Activated T-helper 2 cell treated with anti-CD3 and anti-CD28 coated beads, Interferon-gamma antibody, Interleukin-2, Interleukin-4, amounts not matched to agents 10 μg/mL and 5 μg/mL and 100 μg/mL, durations not matched to agents 14 hours and 24 hours and 36 hours (primary cell): ENCODE measurements at regions of chr15 and their contacts with region 1.

Region 1: DNA sequence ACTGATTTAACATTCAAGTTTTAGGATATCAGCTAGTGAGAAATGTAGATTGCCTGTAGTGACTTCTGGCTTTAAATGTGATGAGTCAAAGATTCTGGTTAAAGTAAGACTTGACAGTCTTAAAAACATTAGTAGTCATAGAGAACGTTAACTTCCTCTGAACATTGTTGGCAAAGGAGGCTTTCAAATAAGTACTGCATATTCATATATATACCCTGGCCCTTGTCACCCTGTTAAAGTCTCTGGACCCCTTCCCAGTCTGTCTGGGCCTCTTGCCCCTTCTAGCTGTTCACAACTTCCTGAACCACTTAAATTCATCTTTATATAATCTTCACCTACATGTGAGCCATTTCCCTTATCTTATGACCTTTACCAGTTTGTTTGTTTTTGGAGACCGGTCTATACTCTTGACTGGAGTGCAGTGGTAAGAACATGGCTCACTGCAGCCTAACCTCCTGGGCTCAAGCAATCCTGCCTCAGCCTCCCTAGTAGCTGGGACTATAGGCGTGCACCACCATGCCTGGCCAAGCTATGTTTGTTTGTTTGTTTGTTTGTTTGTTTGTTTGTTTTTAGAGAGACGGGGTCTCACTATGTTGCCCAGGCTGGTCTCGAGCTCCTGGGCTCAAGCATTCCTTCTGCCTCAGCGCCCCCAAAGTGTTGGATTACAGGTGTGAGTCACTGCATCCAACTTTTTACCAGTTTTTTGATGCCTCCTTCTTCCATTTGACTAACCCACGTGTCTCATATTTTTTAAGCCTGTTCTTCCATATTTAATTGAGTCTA is 64.4 kb upstream of the CRTC3 start:
- DNase-seq: no peak
- H3K4me3 Mint-ChIP-seq: no peak overlapping the region
- H3K27ac Mint-ChIP-seq: peak overlapping the region; percentile 23
- H3K4me1 Mint-ChIP-seq: peaks cover 33% of the 10 kb centered on the region
- H3K27me3 Mint-ChIP-seq: no peaks in the 10 kb centered on the region

Region 2: DNA sequence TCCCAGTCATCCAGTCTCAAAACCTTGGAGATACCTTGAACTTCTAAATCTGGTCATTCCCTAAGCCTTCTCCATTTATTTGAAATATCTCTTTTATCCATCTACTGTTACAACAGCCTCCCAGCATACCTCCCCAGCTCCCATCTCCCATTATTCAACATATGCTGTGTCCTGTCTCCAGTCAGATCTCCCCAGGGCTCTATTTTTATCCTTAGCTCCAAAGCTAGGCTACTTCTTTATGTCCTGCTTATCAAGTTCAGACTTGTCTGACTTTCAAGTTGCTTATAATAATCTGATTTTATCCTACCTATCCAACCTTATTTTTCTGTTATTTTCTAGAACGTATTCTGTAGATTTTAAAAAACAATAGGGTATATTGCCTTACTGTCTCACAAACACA is 33.1 kb before region 1 on chr15:
- intact Hi-C with region 1: loop called (anchors 5 kb)
- DNase-seq: no peak
- H3K4me3 Mint-ChIP-seq: no peak overlapping the region
- H3K27ac Mint-ChIP-seq: no peak overlapping the region
- H3K4me1 Mint-ChIP-seq: peaks cover 18% of the 10 kb centered on the region
- H3K27me3 Mint-ChIP-seq: no peaks in the 10 kb centered on the region

Region 3: DNA sequence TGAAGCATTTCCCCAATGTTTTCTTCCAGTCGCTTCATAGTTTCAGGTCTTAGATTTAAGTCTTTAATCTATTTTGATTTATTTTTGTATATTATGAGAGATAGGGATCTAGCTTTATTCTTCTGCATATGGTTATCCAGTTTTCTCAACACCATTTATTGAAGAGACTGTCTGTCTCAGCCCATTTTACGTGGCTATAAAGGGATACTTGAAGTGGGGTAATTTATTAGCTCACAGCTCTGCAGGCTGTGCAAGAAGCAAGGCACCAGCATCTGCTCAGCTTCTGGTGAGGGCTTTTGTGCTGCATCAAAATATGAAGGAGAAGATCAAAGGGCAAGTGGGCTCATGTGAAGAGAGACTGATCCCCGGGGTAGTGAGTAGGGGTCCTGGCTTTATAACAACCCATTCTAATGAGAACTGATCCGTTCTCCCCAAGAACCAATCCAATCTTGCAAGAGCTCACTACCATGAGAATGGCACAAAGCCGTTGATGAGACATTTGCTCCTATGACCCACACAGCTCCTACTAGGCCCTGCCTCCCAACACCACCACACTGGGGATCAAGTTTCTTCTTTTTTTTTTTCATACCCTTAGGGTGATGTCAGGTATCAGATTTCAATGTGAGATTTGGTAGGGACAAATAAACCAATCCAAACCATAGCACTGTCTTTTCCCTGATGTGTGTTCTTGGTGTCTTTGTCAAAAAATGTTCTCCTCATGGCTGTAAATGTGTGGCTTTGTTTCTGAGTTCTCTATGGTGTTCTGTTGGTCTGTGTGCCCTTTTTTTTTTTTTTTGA is 14.1 kb before region 1 on chr15:
- intact Hi-C with region 1: no loop called
- DNase-seq: no peak
- H3K4me3 Mint-ChIP-seq: no peak overlapping the region
- H3K27ac Mint-ChIP-seq: no peak overlapping the region
- H3K4me1 Mint-ChIP-seq: peaks cover 1% of the 10 kb centered on the region
- H3K27me3 Mint-ChIP-seq: no peaks in the 10 kb centered on the region